ENCODE measurements at regions of chr15 and their contacts with region 1.

Region 1: DNA sequence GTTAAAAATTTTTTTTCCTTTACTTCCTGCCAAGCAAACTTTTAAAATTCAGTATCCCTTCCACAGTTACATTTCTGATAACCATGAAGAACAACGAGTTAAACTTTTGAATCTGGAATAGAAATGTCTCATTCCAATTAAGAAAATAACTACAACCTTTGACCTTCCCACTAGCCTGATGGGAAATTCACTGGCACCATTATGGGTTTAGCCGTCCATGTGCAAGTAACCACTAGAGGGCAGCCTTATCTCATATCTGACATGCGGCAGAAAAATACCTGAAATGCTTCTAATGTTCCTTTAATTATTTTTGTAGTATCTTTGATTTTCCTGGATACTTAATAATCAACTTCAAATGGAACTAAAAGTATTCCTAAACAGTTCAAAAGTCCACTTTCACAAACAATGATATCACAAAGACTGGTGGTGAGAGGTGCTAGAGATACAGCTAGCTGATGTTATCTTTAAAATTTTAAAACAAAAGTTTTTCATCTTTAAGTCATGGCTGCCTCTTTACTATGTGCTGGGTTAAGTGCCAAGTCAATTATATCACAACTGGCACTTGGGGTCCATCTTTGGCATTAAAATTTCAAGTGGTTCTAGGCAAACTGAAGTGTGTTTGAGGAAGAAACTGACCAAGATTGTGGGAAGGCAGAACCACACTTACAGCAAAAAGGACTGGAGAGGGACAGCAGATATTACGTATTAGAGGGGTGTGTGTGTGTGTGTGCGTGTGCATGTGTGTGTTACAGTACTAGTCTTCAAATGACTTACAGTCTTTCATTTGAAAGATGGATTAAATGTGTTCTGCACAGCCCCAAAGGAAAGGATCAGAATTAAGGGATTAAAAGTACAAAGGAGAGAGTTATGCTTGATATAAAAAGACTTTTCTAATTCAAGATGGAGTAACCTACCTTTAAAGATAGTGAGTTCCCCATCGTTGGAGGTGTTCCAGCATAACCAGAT is 107.1 kb upstream of the ICE2 start:
- DNase-seq: peak; percentile 51
- H3K4me3 Mint-ChIP-seq: peak overlapping the region; percentile 74
- H3K27ac Mint-ChIP-seq: peak overlapping the region; percentile 92
- H3K4me1 Mint-ChIP-seq: peaks cover 91% of the 10 kb centered on the region
- H3K27me3 Mint-ChIP-seq: no peaks in the 10 kb centered on the region

Region 2: DNA sequence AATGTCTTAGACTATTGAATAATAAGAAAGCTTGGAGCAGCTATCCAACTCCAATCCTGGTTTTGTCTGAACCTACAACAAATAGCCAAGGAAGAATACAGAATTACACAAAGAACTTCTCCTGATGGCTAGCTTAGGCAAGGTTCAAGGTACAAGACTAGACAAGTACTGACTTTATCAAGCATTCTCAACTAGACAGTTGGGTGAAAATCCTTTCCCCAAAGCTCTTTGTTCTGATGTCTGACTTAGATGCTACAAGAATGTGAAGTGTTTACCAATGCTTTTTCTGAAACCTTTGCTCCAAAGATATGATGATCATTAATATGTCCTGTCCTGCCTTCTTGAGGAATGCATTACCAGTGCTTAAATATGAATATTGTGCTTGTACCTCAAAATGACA is 302.1 kb before region 1 on chr15:
- intact Hi-C with region 1: no loop called
- DNase-seq: no peak
- H3K4me3 Mint-ChIP-seq: no peak overlapping the region
- H3K27ac Mint-ChIP-seq: no peak overlapping the region
- H3K4me1 Mint-ChIP-seq: no peaks in the 10 kb centered on the region
- H3K27me3 Mint-ChIP-seq: peaks cover 30% of the 10 kb centered on the region

Region 3: DNA sequence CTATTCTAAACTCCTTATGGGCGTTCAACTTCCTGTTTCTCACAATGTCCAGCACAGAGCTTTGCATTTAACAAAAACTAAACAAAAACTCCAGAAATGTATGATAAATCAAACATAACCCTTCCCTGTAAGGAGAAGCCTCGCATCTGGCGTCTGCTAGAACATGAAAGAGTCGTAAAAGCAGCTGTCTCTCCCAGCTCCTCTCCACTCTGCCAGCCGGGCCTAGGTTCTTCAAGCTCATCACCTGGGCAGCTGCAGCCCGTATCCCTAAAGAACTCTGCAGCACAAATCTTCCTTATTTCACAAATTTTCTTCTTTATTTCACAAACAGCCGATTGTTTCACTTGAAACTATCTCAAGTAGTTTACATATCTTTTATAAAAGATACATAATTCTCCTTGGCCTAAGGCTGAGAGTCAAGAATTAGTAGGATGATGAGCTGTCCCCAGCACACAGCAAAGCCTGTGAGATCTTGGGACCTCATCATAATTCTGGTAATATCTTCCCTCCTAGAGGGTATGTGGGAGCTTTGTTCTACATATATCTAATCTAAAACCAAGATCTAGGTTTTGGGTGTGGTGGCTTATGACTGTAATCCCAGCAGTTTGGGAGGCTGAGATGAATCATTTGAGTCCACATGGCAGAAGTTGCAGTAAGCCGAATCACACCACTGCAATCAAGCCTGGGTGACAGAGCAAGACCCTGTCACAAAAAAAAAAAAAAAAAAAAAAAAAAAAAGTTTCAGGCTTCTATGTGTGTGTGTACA is 223.5 kb before region 1 on chr15:
- intact Hi-C with region 1: loop called (anchors 2 kb)
- DNase-seq: peak; percentile 49
- H3K4me3 Mint-ChIP-seq: peak overlapping the region; percentile 13
- H3K27ac Mint-ChIP-seq: peak overlapping the region; percentile 82
- H3K4me1 Mint-ChIP-seq: peaks cover 36% of the 10 kb centered on the region
- H3K27me3 Mint-ChIP-seq: no peaks in the 10 kb centered on the region

Region 4: GRCh38 chr15:60540002-60540651 is 45.9 kb before region 1 on chr15:
- intact Hi-C with region 1: loop called (anchors 1 kb)
- DNase-seq: no peak
- H3K4me3 Mint-ChIP-seq: peak overlapping the region; percentile 28
- H3K27ac Mint-ChIP-seq: peak overlapping the region; percentile 91
- H3K4me1 Mint-ChIP-seq: peaks cover 86% of the 10 kb centered on the region
- H3K27me3 Mint-ChIP-seq: no peaks in the 10 kb centered on the region

Region 5: GRCh38 chr15:60574801-60575631 is 11.0 kb before region 1 on chr15:
- intact Hi-C with region 1: loop called (anchors 1 kb)
- DNase-seq: no peak
- H3K4me3 Mint-ChIP-seq: peak overlapping the region; percentile 79
- H3K27ac Mint-ChIP-seq: peak overlapping the region; percentile 99
- H3K4me1 Mint-ChIP-seq: peaks cover 80% of the 10 kb centered on the region
- H3K27me3 Mint-ChIP-seq: no peaks in the 10 kb centered on the region

Region 6: GRCh38 chr15:60798821-60799220 is 212.8 kb after region 1 on chr15:
- intact Hi-C with region 1: loop called (anchors 2 kb)
- DNase-seq: no peak
- H3K4me3 Mint-ChIP-seq: no peak overlapping the region
- H3K27ac Mint-ChIP-seq: peak overlapping the region; percentile 82
- H3K4me1 Mint-ChIP-seq: peaks cover 76% of the 10 kb centered on the region
- H3K27me3 Mint-ChIP-seq: no peaks in the 10 kb centered on the region

Region 7: GRCh38 chr15:61057376-61057775 is 471.4 kb after region 1 on chr15:
- intact Hi-C with region 1: loop called (anchors 5 kb)
- DNase-seq: no peak
- H3K4me3 Mint-ChIP-seq: no peak overlapping the region
- H3K27ac Mint-ChIP-seq: peak overlapping the region; percentile 28
- H3K4me1 Mint-ChIP-seq: peaks cover 16% of the 10 kb centered on the region
- H3K27me3 Mint-ChIP-seq: peaks cover 4% of the 10 kb centered on the region